Breast epithelium (tissue), 4 donors: ENCODE measurements at regions of chr5 and their contacts with region 1.

Region 1: DNA sequence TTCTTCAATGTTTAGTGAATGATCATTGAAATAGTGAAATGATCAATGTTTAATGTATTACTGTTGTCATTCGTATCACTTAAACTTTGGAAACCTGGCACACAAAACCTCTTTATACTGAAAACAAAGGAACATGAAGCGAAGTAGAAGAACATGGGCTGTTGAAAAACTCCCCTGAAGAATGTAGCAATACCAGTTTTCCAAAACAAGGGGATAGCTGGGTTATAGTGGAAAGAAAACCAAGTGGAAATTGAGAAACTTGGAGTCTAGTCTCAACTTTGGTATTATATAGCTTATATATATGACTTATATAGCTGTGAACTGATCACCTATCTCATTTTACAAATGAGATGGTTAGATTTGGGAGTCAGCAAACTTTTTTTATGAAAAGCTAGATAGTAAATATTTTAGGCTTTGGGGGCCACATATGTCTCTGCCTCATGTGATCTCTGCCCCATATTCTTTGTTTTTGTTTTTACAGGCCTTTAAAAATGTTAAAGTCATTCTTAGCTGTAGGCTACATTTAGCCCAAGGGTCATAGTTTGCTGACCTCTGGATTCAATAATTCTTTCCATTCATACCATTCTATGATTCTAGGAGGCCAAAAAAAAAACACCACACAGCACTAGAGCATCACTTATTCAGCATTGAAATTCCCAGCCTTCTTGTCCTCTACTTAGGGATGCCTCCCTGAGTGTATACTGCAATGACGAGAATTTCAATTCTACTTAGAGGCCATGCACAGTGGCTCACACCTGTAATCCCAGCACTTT is 16.8 kb downstream of the PTCD2 start:
- DNase-seq: no peak
- H3K4me3 ChIP-seq: no peak overlapping the region
- H3K27ac ChIP-seq: no peak overlapping the region
- H3K4me1 ChIP-seq: no peaks in the 10 kb centered on the region
- H3K27me3 ChIP-seq: no peaks in the 10 kb centered on the region
- CTCF ChIP-seq: no peak
- POLR2A ChIP-seq: no peak

Region 2: DNA sequence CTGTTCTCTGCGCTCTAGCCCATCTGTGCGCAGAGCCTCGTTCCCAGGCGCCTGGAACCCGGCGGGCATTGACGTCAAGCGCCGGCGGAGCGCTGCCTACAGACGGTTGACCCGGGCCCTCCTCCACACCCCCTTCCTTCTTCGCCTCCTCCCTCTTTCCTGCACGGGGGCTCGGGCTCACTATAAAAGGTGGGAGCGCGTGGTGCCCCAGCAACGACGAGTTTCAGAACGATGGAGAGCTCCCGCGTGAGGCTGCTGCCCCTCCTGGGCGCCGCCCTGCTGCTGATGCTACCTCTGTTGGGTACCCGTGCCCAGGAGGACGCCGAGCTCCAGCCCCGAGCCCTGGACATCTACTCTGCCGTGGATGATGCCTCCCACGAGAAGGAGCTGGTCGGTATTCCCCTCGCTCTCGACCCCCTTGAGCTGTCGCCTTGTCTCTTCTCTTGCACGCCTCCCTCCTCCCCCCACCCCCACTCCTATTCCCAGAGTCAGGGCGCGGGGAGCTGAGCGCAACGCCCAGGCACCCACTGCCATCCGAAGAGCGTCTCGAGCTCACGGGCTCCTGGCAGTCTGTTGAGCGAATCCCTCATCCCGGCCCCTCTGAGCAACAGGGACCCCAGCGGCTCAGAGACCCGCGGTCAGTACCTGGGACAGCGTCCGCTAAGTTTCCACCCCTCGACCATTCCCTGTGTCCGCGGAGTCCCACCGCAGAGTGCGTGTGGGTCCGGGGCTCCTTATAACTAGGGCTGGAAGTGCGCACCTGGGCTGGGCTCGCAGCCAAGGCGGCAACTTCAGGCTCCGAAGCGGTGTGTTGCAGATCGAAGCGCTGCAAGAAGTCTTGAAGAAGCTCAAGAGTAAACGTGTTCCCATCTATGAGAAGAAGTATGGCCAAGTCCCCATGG is 617.7 kb before region 1 on chr5 and contains the start of gene CARTPT:
- intact Hi-C with region 1: loop called (anchors 5 kb)
- DNase-seq: no peak
- H3K4me3 ChIP-seq: peak within 1 kb of the TSS in 1 of 3 donors; percentile 22
- H3K27ac ChIP-seq: no peak within 1 kb of the TSS
- H3K4me1 ChIP-seq: no peaks in the 10 kb centered on the region
- H3K27me3 ChIP-seq: peaks cover 3 to 29% of the 10 kb centered on the region in 2 donors
- CTCF ChIP-seq: no peak
- POLR2A ChIP-seq: no peak
- total RNA-seq, gene CARTPT: not detected

Region 3: DNA sequence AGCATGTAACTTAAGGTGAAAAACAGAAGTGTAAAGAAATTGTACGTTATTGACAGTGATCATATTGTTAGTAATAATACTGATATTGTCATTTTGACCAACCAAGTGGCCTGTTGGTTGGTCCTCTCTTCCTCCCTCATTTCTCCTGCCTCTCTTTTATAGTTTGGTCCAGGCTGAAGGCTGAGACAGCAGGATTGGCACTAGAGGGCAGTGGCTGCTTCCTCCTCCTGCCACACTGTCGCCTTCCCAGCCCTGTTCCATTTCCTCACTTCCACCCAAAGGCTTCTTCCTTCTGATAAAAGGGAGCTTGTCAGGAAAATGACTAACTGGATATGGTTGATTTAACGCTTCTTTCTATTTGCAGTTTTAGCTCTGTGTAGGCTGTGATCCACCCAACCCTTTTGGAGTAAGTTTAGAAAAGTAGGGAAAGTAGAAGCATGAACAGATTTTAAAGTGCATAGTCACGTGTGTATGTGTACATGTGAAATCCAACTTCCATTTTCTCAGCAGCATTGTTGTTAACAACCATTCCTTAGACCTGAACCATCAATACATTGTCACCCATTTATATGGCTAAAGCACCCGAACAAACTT is 18.8 kb after region 1 on chr5:
- intact Hi-C with region 1: no loop called
- DNase-seq: no peak
- H3K4me3 ChIP-seq: no peak overlapping the region
- H3K27ac ChIP-seq: no peak overlapping the region
- H3K4me1 ChIP-seq: no peaks in the 10 kb centered on the region
- H3K27me3 ChIP-seq: no peaks in the 10 kb centered on the region
- CTCF ChIP-seq: no peak
- POLR2A ChIP-seq: no peak

Region 4: DNA sequence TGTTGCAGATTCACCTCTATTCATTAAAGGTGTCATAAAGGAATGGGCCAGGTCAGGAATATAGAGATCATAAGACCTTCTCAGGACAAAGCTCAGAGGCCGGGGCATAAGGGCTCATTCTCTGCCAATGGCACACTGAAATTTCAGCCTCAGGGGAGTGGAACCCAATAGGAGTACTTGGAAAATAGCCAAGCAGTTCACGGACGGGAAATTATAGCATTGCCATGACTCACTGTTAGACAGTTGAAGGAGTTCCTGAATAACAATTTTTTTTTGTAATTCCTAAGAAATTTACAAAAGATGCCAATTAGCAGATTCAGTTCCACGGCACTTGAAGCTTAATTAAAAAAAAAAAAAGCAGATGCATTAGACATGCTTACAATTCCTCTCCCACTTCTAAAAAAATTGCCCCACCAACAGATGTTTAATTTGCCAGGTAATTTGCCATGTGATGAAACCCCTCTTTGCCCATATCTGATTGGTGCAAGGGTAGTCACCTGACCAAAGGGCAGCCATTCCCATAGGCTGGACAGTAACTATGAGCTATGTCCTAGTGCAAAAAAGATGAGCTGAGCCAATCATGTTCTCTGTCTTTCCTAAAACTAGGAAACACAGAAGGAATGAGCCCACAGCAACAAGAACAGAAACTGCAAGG is 41.8 kb after region 1 on chr5:
- intact Hi-C with region 1: no loop called
- DNase-seq: peak in 1 of 2 donors; percentile 51
- H3K4me3 ChIP-seq: no peak overlapping the region
- H3K27ac ChIP-seq: peak overlapping the region; percentile 40 to 41
- H3K4me1 ChIP-seq: no peaks in the 10 kb centered on the region
- H3K27me3 ChIP-seq: no peaks in the 10 kb centered on the region
- CTCF ChIP-seq: no peak
- POLR2A ChIP-seq: no peak